Heart left ventricle (tissue), 16 donors: ENCODE measurements at regions of chr1 and their contacts with region 1.

Region 1: GRCh38 chr1:203861379-203862184 is at the start of gene SNRPE:
- DNase-seq: peak; percentile 96 to 97 (median 96)
- ATAC-seq: peak; percentile 98 to 99 (median 98)
- H3K4me3 ChIP-seq: peak within 1 kb of the TSS; percentile 63 to 96 (median 81)
- H3K27ac ChIP-seq: peak within 1 kb of the TSS in 10 of 12 donors; percentile 46 to 76 (median 66)
- H3K4me1 ChIP-seq: peaks cover 0 to 25% (median 16%) of the 10 kb centered on the region in 12 donors
- H3K27me3 ChIP-seq: no peaks in the 10 kb centered on the region
- CTCF ChIP-seq: peak; percentile 85 to 99 (median 96)
- POLR2A ChIP-seq: peak in 1 of 2 donors; percentile 27
- total RNA-seq, gene SNRPE: 17.7 to 66.4 (median 48.6) TPM

Region 2: DNA sequence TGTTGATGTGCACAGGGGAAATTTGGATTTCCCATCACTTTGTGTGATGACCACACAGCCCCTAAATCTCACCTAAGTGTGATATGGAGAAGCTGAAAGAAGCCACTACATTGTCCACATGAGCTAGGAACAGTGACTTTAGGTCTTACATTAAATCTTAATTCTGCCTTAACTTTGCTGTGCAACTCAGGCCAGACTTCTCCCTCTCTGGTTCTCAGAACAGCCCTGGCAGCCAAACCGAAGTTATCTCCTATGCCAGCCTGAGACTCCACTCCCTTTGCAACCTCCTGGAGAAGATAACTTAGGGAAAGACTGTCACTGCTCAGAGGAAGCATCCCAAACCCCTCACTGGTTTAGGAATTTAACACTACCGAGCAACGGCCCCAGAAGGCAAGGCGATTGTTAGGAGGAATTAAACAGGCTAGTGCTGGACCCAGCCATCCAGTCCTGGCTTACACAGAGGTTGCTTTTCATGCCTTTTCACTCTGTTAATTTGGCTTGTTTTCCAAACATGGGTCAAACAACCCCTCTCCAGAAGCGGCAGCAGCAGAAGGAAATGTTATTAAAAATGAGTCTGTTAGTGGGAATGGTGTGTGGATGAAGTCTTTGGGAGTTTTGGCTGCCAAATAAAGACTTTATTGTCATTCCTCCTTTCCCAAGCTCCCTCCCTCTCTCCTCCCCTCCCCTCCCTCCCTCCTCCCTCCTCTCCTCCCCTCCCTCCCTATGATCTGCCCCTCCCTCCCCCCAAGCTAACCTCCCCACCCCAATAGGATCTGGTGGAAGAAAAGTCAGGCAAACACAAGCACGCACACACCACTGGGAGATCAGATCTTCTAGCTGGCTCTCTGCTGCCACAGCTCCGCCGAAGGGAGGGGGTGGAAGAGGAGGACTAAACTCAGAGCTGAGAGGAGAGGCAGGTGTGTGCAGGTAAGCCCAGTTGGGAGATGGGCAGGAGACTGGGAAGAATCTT is 386.3 kb before region 1 on chr1 and contains the start of gene PRELP:
- intact Hi-C with region 1: no loop called
- DNase-seq: peak in 3 of 5 donors; percentile 22 to 58 (median 47)
- ATAC-seq: peak; percentile 43 to 68 (median 63)
- H3K4me3 ChIP-seq: peak within 1 kb of the TSS in 11 of 12 donors; percentile 20 to 72 (median 50)
- H3K27ac ChIP-seq: peak within 1 kb of the TSS; percentile 52 to 89 (median 77)
- H3K4me1 ChIP-seq: peaks cover 0 to 33% (median 5%) of the 10 kb centered on the region in 12 donors
- H3K27me3 ChIP-seq: no peaks in the 10 kb centered on the region
- CTCF ChIP-seq: no peak
- POLR2A ChIP-seq: peak in 1 of 2 donors; percentile 27
- total RNA-seq, gene PRELP: 3.6 to 61.9 (median 13.6) TPM

Region 3: GRCh38 chr1:204207136-204207616 is 345.6 kb after region 1 on chr1:
- intact Hi-C with region 1: loop called in 8 of 10 experiments (anchors 1 to 10 kb)
- DNase-seq: peak; percentile 48 to 86 (median 63)
- ATAC-seq: peak; percentile 78 to 91 (median 86)
- H3K4me3 ChIP-seq: no peak overlapping the region
- H3K27ac ChIP-seq: no peak overlapping the region
- H3K4me1 ChIP-seq: peaks cover 0 to 4% (median 0%) of the 10 kb centered on the region in 12 donors
- H3K27me3 ChIP-seq: peaks cover 0 to 28% (median 0%) of the 10 kb centered on the region in 9 donors
- CTCF ChIP-seq: peak; percentile 77 to 96 (median 89)
- POLR2A ChIP-seq: no peak

Region 4: DNA sequence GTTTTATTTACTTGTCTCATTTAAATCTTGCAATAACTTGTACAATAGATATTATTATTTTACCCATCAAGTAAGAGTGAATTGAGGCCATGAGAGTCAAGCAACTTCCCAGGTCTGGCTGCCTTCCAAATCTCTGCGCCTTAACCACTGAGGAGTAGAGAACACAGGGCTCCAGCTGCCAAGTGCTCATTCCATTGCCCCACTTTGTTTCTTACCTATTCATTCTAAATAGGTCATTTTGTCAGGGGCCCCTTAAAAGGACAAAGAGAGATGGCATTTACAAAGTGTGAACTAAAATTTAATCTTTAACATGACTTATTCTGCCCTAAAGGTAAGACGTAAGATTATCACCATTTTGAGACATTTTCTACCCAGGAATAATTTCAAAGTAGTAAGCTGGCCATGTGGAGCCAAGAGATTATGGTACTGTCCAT is 546.5 kb after region 1 on chr1:
- intact Hi-C with region 1: loop called in 2 of 10 experiments (anchors 10 kb)
- DNase-seq: peak in 4 of 5 donors; percentile 73 to 88 (median 82)
- ATAC-seq: no peak
- H3K4me3 ChIP-seq: peak overlapping the region; percentile 69 to 98 (median 92)
- H3K27ac ChIP-seq: peak overlapping the region in 9 of 12 donors; percentile 3 to 100 (median 98)
- H3K4me1 ChIP-seq: peaks cover 0 to 48% (median 26%) of the 10 kb centered on the region in 12 donors
- H3K27me3 ChIP-seq: no peaks in the 10 kb centered on the region
- CTCF ChIP-seq: no peak
- POLR2A ChIP-seq: no peak